Panc1 (cell line): ENCODE measurements at regions of chr7 and their contacts with region 1.

Region 1: DNA sequence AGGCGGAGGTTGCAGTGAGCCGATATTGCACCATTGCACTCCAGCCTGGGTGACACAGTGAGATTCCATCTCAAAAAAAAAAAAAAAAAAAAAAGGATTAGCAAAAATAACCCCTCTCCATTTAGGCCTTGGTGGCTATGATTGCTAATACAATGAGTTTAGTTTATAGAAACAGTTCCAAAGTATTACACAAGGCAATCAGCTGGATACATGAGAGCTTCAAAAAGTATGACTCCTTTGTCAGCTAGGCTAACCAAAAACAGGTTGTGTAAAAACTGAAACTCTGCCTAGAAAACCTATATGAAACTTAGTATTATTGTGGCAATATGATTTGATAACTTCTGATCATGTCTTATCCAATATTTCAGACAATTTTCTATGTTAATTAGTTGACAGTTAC is 57.2 kb downstream of the SUGCT start:
- DNase-seq: no peak
- ATAC-seq: no peak
- H3K4me3 ChIP-seq: no peak overlapping the region
- H3K27ac ChIP-seq: no peak overlapping the region
- H3K4me1 ChIP-seq: no peaks in the 10 kb centered on the region
- H3K27me3 ChIP-seq: no peaks in the 10 kb centered on the region
- CTCF ChIP-seq: no peak

Region 2: GRCh38 chr7:40047661-40048060 is 144.4 kb before region 1 on chr7:
- CTCF ChIA-PET with region 1: no interaction called
- POLR2A ChIA-PET with region 1: no interaction called
- in situ Hi-C with region 1: no loop called
- intact Hi-C with region 1: no loop called
- DNase-seq: no peak
- ATAC-seq: no peak
- H3K4me3 ChIP-seq: no peak overlapping the region
- H3K27ac ChIP-seq: no peak overlapping the region
- H3K4me1 ChIP-seq: no peaks in the 10 kb centered on the region
- H3K27me3 ChIP-seq: no peaks in the 10 kb centered on the region
- CTCF ChIP-seq: no peak

Region 3: DNA sequence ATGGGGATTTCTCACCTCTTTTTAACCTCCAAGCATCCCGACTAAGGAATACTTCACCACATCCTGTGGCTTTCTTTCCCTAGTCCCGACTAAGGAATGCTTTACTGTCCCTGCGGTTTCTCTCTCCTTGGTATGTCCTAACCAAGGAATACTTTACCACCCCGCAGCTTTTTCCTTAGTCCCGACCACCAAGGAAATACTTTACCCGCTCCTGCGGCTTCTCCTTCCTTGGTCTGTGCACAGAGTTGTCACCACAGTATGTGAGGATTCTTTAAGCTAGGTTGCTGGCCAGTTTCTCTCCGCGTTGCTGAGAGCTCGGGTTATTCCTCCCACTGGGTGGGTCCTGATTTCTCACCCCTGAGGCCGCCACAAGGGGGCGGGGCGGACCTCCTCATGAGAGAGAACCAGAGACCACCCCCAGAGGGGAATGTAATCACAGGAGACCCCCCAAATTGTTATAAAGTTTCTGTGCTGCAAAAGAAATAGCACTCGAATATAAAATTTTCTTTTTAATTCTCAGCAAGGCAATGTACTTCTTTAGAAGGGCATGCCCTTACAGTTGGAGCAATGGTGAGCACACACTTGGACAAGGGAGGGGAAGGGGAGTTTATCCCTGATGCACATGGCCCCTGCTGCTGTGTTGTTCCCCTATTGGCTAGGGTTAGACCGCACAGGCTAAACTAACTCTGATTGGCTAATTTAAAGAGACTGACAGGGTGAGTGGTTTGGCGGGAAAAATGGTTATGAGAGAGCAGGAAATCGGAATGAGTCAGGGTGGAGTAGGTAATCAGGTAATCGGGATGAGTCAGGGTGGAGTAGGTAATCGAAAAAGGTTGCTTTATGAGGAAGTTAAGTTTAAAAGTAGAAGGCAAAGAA is 44.4 kb before region 1 on chr7:
- CTCF ChIA-PET with region 1: interaction called, 12 read pairs
- POLR2A ChIA-PET with region 1: no interaction called
- in situ Hi-C with region 1: no loop called
- intact Hi-C with region 1: no loop called
- DNase-seq: no peak
- ATAC-seq: no peak
- H3K4me3 ChIP-seq: no peak overlapping the region
- H3K27ac ChIP-seq: no peak overlapping the region
- H3K4me1 ChIP-seq: no peaks in the 10 kb centered on the region
- H3K27me3 ChIP-seq: no peaks in the 10 kb centered on the region
- CTCF ChIP-seq: no peak

Region 4: DNA sequence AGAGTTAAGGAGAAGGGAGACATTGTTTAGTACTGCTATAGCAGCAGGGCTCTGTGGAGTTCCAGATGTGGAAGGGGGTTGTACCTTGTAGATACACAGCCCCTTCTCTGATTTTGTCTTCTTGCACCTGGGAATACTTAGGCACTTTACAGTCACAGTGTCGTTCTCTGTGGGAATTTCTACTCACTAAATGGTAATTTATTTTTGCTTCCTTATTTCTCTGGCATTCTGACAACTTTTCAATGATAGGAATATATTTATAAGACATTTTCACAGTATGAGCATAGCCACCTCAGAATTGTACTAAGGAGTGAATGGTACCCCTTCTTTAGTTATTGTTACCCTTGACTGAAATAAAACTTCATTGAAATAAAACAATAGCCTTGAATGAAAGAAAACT is 75.5 kb after region 1 on chr7:
- CTCF ChIA-PET with region 1: no interaction called
- POLR2A ChIA-PET with region 1: no interaction called
- in situ Hi-C with region 1: no loop called
- intact Hi-C with region 1: no loop called
- DNase-seq: no peak
- ATAC-seq: no peak
- H3K4me3 ChIP-seq: no peak overlapping the region
- H3K27ac ChIP-seq: no peak overlapping the region
- H3K4me1 ChIP-seq: no peaks in the 10 kb centered on the region
- H3K27me3 ChIP-seq: no peaks in the 10 kb centered on the region
- CTCF ChIP-seq: no peak